ENCODE measurements at regions of chr2 and their contacts with region 1.

Region 1: GRCh38 chr2:195318440-195319111 is 338.4 kb upstream of the SLC39A10 start:
- DNase-seq: no peak
- H3K4me3 ChIP-seq: no peak overlapping the region
- H3K27ac ChIP-seq: no peak overlapping the region
- H3K4me1 ChIP-seq: peaks cover 0 to 20% (median 11%) of the 10 kb centered on the region in 4 donors
- H3K27me3 ChIP-seq: no peaks in the 10 kb centered on the region
- CTCF ChIP-seq: peak; percentile 42 to 57 (median 45)
- EP300 ChIP-seq: no peak
- POLR2A ChIP-seq: no peak

Region 2: DNA sequence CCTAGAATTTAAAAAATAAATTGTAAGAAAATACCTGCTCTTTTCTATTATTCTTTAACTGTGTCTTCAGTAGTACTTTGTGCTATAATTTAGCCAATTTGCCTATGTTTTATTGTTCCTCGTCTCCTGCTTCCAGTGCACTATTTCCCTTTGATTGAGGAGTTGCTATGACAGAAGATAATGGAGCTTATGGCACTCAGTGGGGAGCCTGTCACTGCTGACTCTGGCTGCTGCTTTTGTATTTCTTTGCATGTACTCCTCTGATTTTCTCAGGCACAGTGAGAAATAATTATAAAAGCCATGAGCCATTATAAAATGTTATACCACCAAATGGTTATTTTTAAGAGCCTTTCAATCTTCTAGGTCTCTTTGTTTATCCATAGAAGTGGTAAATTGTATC is 972.4 kb before region 1 on chr2:
- intact Hi-C with region 1: no loop called
- DNase-seq: no peak
- H3K4me3 ChIP-seq: no peak overlapping the region
- H3K27ac ChIP-seq: no peak overlapping the region
- H3K4me1 ChIP-seq: no peaks in the 10 kb centered on the region
- H3K27me3 ChIP-seq: no peaks in the 10 kb centered on the region
- CTCF ChIP-seq: no peak
- EP300 ChIP-seq: no peak
- POLR2A ChIP-seq: no peak

Region 3: DNA sequence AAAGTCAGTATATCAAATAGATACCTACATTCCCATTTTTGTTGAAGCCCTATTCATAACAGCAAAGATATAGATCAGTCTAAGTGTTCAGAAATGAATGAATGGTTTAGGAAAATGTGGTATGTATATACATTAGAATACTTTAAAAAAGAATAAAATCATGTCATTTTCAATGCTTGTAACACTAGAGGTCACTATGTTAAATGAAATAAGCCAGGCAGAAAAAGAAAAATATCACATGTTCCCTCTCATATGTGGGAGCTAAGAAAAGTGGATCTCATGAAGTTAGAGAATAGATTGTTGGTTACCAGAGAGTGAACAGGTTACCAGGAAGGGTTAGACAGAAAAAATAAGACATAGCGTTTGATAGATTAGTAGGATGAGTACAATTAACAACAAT is 772.6 kb before region 1 on chr2:
- intact Hi-C with region 1: loop called (anchors 5 kb)
- DNase-seq: no peak
- H3K4me3 ChIP-seq: no peak overlapping the region
- H3K27ac ChIP-seq: no peak overlapping the region
- H3K4me1 ChIP-seq: peaks cover 0 to 11% (median 5%) of the 10 kb centered on the region in 4 donors
- H3K27me3 ChIP-seq: no peaks in the 10 kb centered on the region
- CTCF ChIP-seq: peak in 1 of 3 experiments; percentile 32
- EP300 ChIP-seq: no peak
- POLR2A ChIP-seq: no peak

Region 4: GRCh38 chr2:195820373-195820772 is 501.8 kb after region 1 on chr2:
- intact Hi-C with region 1: no loop called
- DNase-seq: no peak
- H3K4me3 ChIP-seq: no peak overlapping the region
- H3K27ac ChIP-seq: no peak overlapping the region
- H3K4me1 ChIP-seq: no peaks in the 10 kb centered on the region
- H3K27me3 ChIP-seq: no peaks in the 10 kb centered on the region
- CTCF ChIP-seq: no peak
- EP300 ChIP-seq: no peak
- POLR2A ChIP-seq: no peak

Measured in esophagus muscularis mucosa (tissue), 4 donors.